ENCODE measurements at regions of chr20 and their contacts with region 1.

Region 1: DNA sequence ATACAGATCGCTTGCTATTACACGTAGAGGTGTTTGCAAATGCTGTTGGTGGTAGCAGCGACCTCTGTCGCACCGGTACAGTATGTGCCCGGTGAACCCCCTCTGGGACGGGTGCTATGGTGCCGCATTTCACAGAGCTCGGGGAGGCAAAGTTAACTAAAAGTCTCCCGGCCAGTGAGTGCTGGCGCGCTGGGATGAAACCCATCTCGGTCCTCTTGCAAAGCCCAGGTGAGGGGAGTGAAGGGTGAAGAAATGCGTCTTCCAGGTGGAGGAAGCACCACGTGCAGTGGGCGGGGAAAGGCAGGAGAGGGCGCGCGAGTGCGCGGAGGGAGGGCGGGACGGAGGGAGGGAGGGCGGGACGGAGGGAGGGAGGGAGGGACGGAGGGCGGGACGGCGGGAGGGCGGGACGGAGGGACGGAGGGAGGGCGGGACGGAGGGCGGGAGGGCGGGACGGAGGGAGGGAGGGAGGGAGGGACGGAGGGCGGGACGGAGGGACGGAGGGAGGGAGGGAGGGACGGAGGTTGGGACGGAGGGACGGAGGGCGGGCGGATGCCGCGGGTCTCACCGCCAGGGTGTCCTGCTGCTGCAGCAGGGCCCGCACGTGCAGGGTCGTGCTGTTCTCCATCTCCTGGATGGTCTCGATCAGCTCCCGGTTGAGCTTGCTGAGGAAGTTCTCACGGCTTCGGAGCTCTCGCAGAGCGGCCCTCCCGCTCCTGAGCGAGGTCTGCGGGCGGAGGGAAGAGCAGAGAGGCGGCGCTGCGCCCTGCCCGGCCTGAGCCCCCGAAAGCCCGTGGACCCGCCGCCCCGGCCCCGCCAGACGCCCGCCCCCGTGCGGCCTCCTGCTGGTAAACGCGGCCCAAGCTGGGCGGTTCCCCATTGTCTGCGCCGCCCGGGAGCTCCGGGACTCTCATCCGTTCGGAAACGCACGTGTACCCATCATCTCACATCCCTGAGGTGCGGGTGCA is 11.7 kb downstream of the C20orf96 start:
- DNase-seq: peak in 1 of 2 experiments; percentile 61
- H3K4me3 ChIP-seq: peak overlapping the region; percentile 4 to 47 (median 20); a peak in 6 of 8 replicates
- H3K27ac ChIP-seq: no peak overlapping the region
- H3K4me1 ChIP-seq: peaks cover 0 to 4% (median 4%) of the 10 kb centered on the region in 4 experiments; a peak in 4 of 7 replicates
- H3K27me3 ChIP-seq: peaks cover 0 to 2% (median under 1%) of the 10 kb centered on the region in 4 experiments; a peak in 2 of 7 replicates
- CTCF ChIP-seq: peak in 2 of 3 experiments; percentile 51 to 63; a peak in 3 of 4 replicates
- EP300 ChIP-seq: no peak
- POLR2A ChIP-seq: no peak
- RAD21 ChIP-seq: no peak; a peak in 2 of 4 replicates

Region 2: GRCh38 chr20:266596-267562 is 12.0 kb before region 1 on chr20:
- CTCF ChIA-PET with region 1: interaction called, 63 read pairs
- POLR2A ChIA-PET with region 1: interaction called, 21 read pairs
- DNase-seq: peak; percentile 84 to 99
- H3K4me3 ChIP-seq: peak overlapping the region; percentile 4 to 53 (median 31); a peak in 6 of 8 replicates
- H3K27ac ChIP-seq: no peak overlapping the region
- H3K4me1 ChIP-seq: 0 out of 7 replicates have a peak, but pooled peaks cover 0 to 2% (median 0%) of the 10 kb centered on the region in 4 experiments
- H3K27me3 ChIP-seq: peaks cover 0 to 26% (median 11%) of the 10 kb centered on the region in 4 experiments; a peak in 6 of 7 replicates
- CTCF ChIP-seq: peak; percentile 96 to 98 (median 97)
- EP300 ChIP-seq: no peak
- POLR2A ChIP-seq: peak in 1 of 2 experiments; percentile 94; a peak in 2 of 3 replicates
- RAD21 ChIP-seq: peak; percentile 95